Stomach (tissue), 19 donors: ENCODE measurements at regions of chr9 and their contacts with region 1.

Region 1: GRCh38 chr9:130461218-130461630 is 16.5 kb downstream of the ASS1 start:
- DNase-seq: peak; percentile 73 to 84
- H3K4me3 ChIP-seq: no peak overlapping the region
- H3K27ac ChIP-seq: no peak overlapping the region
- H3K4me1 ChIP-seq: peaks cover 0 to 11% (median 4%) of the 10 kb centered on the region in 4 donors
- H3K27me3 ChIP-seq: peaks cover 0 to 20% (median 0%) of the 10 kb centered on the region in 3 donors
- CTCF ChIP-seq: peak in 5 of 7 experiments; percentile 67 to 94 (median 86)
- EP300 ChIP-seq: no peak
- POLR2A ChIP-seq: no peak

Region 2: GRCh38 chr9:130651752-130652151 is 190.5 kb after region 1 on chr9:
- intact Hi-C with region 1: no loop called
- DNase-seq: no peak
- H3K4me3 ChIP-seq: no peak overlapping the region
- H3K27ac ChIP-seq: no peak overlapping the region
- H3K4me1 ChIP-seq: no peaks in the 10 kb centered on the region
- H3K27me3 ChIP-seq: peaks cover 0 to 88% (median 11%) of the 10 kb centered on the region in 3 donors
- CTCF ChIP-seq: no peak
- EP300 ChIP-seq: no peak
- POLR2A ChIP-seq: no peak

Region 3: GRCh38 chr9:130682490-130683121 is 221.4 kb after region 1 on chr9:
- intact Hi-C with region 1: loop called (anchors 5 kb)
- DNase-seq: peak; percentile 88 to 91
- H3K4me3 ChIP-seq: peak overlapping the region; percentile 55 to 76 (median 64)
- H3K27ac ChIP-seq: peak overlapping the region in 1 of 5 donors; percentile 8
- H3K4me1 ChIP-seq: peaks cover 14 to 20% (median 16%) of the 10 kb centered on the region in 4 donors
- H3K27me3 ChIP-seq: peaks cover 0 to 32% (median 6%) of the 10 kb centered on the region in 3 donors
- CTCF ChIP-seq: peak in 5 of 7 experiments; percentile 65 to 80 (median 76)
- EP300 ChIP-seq: no peak
- POLR2A ChIP-seq: no peak

Region 4: DNA sequence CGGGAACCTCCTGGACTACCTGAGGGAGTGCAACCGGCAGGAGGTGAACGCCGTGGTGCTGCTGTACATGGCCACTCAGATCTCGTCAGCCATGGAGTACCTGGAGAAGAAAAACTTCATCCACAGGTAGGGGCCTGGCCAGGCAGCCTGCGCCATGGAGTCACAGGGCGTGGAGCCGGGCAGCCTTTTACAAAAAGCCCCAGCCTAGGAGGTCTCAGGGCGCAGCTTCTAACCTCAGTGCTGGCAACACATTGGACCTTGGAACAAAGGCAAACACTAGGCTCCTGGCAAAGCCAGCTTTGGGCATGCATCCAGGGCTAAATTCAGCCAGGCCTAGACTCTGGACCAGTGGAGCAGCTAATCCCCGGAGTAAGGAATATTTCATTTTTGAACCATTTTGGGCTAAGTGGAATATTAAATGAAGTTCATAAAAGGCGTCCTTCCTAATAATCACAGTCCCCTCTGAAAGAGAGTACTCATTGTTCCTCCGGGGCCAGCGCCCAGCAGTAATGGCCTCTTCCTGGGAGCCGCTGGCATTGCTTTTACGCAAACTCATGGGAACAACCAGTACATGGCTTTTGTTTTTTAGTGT is 411.8 kb after region 1 on chr9:
- intact Hi-C with region 1: no loop called
- DNase-seq: peak; percentile 41 to 89
- H3K4me3 ChIP-seq: no peak overlapping the region
- H3K27ac ChIP-seq: peak overlapping the region; percentile 48 to 79 (median 60)
- H3K4me1 ChIP-seq: peaks cover 27 to 70% (median 56%) of the 10 kb centered on the region in 4 donors
- H3K27me3 ChIP-seq: no peaks in the 10 kb centered on the region
- CTCF ChIP-seq: peak in 1 of 7 experiments; percentile 7
- EP300 ChIP-seq: peak; percentile 6
- POLR2A ChIP-seq: no peak